ENCODE measurements at regions of chr1 and their contacts with region 1.

Region 1: GRCh38 chr1:178877896-178878295 is 7.0 kb upstream of the ANGPTL1 start:
- DNase-seq: no peak
- H3K4me3 ChIP-seq: no peak overlapping the region
- H3K4me3 Mint-ChIP-seq: no peak overlapping the region
- H3K27ac Mint-ChIP-seq: no peak overlapping the region
- H3K4me1 ChIP-seq: no peaks in the 10 kb centered on the region
- H3K4me1 Mint-ChIP-seq: peaks cover 6% of the 10 kb centered on the region
- H3K27me3 ChIP-seq: no peaks in the 10 kb centered on the region
- H3K27me3 Mint-ChIP-seq: no peaks in the 10 kb centered on the region
- CTCF ChIP-seq: no peak

Region 2: DNA sequence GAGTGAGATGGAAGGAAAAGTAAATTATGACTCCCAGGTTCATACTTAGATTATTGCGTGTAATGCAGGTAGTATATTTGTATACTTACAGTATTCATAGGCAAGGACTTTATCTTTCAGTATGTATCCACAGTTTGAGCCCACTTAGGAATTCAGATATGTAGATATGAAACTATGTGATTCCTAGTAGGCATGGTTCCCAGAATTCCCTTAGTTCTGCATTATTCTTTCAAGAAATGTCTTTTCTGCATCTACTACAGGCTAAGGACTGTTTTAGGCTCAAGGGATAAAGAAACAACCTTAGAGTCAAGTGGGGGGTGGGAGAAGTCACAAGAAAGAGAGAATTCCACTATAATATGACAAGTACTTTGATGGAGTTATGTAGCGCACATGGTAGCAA is 20.8 kb before region 1 on chr1:
- CTCF ChIA-PET with region 1: no interaction called
- POLR2A ChIA-PET with region 1: no interaction called
- intact Hi-C with region 1: no loop called
- DNase-seq: no peak
- H3K4me3 ChIP-seq: no peak overlapping the region
- H3K4me3 Mint-ChIP-seq: no peak overlapping the region
- H3K27ac Mint-ChIP-seq: no peak overlapping the region
- H3K4me1 ChIP-seq: no peaks in the 10 kb centered on the region
- H3K4me1 Mint-ChIP-seq: no peaks in the 10 kb centered on the region
- H3K27me3 ChIP-seq: no peaks in the 10 kb centered on the region
- H3K27me3 Mint-ChIP-seq: no peaks in the 10 kb centered on the region
- CTCF ChIP-seq: no peak

Region 3: DNA sequence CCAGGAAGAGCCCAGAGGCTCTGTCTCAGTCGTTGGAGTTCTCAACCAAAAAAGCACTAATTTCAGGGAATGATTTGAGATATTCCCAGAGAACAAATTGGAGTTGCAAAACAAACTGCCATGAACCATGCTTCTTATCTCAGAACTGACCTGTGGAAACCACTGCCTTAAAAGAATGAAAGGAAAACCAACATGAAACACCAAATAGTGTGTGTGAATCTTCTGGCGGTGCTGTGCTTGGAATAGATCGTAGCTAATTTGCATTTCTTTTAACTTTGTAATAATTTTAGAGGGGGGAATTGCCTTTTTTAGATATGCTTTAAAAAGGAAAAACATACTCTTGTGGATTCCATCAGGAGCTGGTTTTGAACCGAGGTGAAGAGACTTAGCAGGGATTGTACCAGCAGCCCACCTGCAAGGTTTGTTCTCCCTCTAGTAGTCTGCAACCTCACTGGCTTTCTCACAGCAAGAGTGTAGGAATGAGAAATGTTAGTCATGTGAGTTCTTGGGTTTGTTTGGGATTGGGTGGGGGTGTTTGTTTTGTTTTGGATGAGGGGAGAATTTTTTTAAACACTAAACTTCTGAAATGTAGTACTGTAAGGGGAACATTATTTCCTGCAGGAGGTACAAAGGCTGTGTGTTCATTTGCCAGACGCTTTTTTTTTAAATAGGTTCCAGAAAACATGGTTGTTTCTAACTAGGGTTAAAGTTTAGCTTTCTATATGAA is 38.7 kb after region 1 on chr1:
- CTCF ChIA-PET with region 1: no interaction called
- POLR2A ChIA-PET with region 1: no interaction called
- intact Hi-C with region 1: loop called (anchors 2 kb)
- DNase-seq: no peak
- H3K4me3 ChIP-seq: no peak overlapping the region
- H3K4me3 Mint-ChIP-seq: no peak overlapping the region
- H3K27ac Mint-ChIP-seq: no peak overlapping the region
- H3K4me1 ChIP-seq: no peaks in the 10 kb centered on the region
- H3K4me1 Mint-ChIP-seq: no peaks in the 10 kb centered on the region
- H3K27me3 ChIP-seq: no peaks in the 10 kb centered on the region
- H3K27me3 Mint-ChIP-seq: no peaks in the 10 kb centered on the region
- CTCF ChIP-seq: no peak